IMR-90 (cell line): ENCODE measurements at regions of chr17 and their contacts with region 1.

Region 1: GRCh38 chr17:80892019-80892855 is 99.4 kb upstream of the CHMP6 start:
- DNase-seq: peak; percentile 99
- ATAC-seq: peak; percentile 89
- H3K4me3 ChIP-seq: no peak overlapping the region
- H3K27ac ChIP-seq: peak overlapping the region; percentile 94
- H3K4me1 ChIP-seq: peaks cover 29% of the 10 kb centered on the region
- H3K27me3 ChIP-seq: no peaks in the 10 kb centered on the region
- CTCF ChIP-seq: no peak
- POLR2A ChIP-seq: peak; percentile 80
- RAD21 ChIP-seq: peak; percentile 17

Region 2: DNA sequence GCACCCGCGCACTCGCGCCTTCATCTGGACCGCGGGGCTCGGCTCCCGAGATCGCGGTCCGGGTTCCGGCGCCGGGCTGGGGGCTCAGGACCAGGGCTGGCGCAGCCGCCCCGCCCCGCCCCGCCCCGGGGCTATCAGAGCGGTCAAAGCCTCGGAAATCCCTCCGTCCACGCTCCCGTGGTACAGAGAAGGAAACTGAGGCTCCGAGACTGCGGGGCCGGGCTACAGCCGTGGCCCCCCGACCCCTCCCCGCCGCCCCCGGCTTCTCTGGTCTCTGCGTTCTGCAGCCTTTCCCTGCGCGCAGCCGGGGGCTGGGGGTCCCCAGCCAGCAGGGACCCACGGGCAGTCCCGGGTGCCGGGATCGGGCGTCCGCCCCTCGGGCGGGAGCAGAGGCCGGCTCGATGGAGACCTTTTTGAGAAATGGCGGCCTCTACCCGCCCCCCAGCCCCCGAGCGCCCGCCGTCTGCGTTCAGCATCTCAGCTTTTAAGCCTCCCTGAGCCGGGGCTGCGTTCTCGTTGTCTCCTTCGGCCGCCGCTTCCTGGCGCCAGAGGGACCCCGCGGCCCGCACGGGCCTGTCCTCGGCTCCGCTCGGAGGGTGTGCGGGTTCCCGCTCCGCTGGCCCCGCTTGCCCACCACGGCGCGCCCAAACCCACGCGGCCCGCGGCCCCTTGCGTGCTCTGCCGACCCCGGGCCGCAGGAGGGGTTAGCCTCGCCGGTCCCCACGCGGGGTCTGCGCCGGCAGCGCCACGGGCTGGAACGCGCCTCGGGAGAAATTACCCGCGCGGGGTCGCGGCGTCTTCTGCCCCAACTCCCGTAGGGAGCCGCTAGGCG is 414.4 kb before region 1 on chr17:
- CTCF ChIA-PET with region 1: no interaction called
- POLR2A ChIA-PET with region 1: no interaction called
- dilution Hi-C with region 1: no loop called
- in situ Hi-C with region 1: no loop called
- intact Hi-C with region 1: loop called (anchors 5 kb)
- DNase-seq: peak; percentile 59
- ATAC-seq: peak; percentile 73
- H3K4me3 ChIP-seq: peak overlapping the region; percentile 47
- H3K27ac ChIP-seq: no peak overlapping the region
- H3K4me1 ChIP-seq: peaks cover 4% of the 10 kb centered on the region; the same call in 1 of the 2 replicates
- H3K27me3 ChIP-seq: peaks cover 63% of the 10 kb centered on the region
- CTCF ChIP-seq: peak; percentile 79
- POLR2A ChIP-seq: no peak
- RAD21 ChIP-seq: peak; percentile 83

Region 3: GRCh38 chr17:80673152-80673920 is 218.9 kb before region 1 on chr17:
- CTCF ChIA-PET with region 1: no interaction called
- POLR2A ChIA-PET with region 1: no interaction called
- dilution Hi-C with region 1: no loop called
- in situ Hi-C with region 1: no loop called
- intact Hi-C with region 1: loop called (anchors 10 kb)
- DNase-seq: peak; percentile 40
- ATAC-seq: peak; percentile 31; the same call in 1 of the 2 replicates
- H3K4me3 ChIP-seq: no peak overlapping the region
- H3K27ac ChIP-seq: peak overlapping the region; percentile 12; the same call in 1 of the 2 replicates
- H3K4me1 ChIP-seq: peaks cover 6% of the 10 kb centered on the region
- H3K27me3 ChIP-seq: no peaks in the 10 kb centered on the region
- CTCF ChIP-seq: no peak
- POLR2A ChIP-seq: no peak
- RAD21 ChIP-seq: no peak

Region 4: GRCh38 chr17:80761110-80761871 is 130.9 kb before region 1 on chr17:
- CTCF ChIA-PET with region 1: no interaction called
- POLR2A ChIA-PET with region 1: no interaction called
- dilution Hi-C with region 1: no loop called
- in situ Hi-C with region 1: no loop called
- intact Hi-C with region 1: no loop called
- DNase-seq: peak; percentile 88
- ATAC-seq: peak; percentile 79
- H3K4me3 ChIP-seq: no peak overlapping the region
- H3K27ac ChIP-seq: peak overlapping the region; percentile 68
- H3K4me1 ChIP-seq: peaks cover 24% of the 10 kb centered on the region
- H3K27me3 ChIP-seq: no peaks in the 10 kb centered on the region
- CTCF ChIP-seq: no peak; the same call in 1 of the 2 replicates
- POLR2A ChIP-seq: 0 out of 2 replicates have a peak, but pooled peaks have one; percentile 8
- RAD21 ChIP-seq: no peak

Region 5: GRCh38 chr17:80832888-80833583 is 59.2 kb before region 1 on chr17:
- CTCF ChIA-PET with region 1: no interaction called
- POLR2A ChIA-PET with region 1: no interaction called
- dilution Hi-C with region 1: no loop called
- in situ Hi-C with region 1: no loop called
- intact Hi-C with region 1: loop called (anchors 1 kb)
- DNase-seq: peak; percentile 99
- ATAC-seq: peak; percentile 95
- H3K4me3 ChIP-seq: peak overlapping the region; percentile 45
- H3K27ac ChIP-seq: peak overlapping the region; percentile 94
- H3K4me1 ChIP-seq: peaks cover 19% of the 10 kb centered on the region
- H3K27me3 ChIP-seq: no peaks in the 10 kb centered on the region
- CTCF ChIP-seq: 0 out of 2 replicates have a peak, but pooled peaks have one; percentile 1
- POLR2A ChIP-seq: peak; percentile 93
- RAD21 ChIP-seq: peak; percentile 34; the same call in 1 of the 2 replicates

Region 6: GRCh38 chr17:81109957-81110356 is 217.7 kb after region 1 on chr17:
- CTCF ChIA-PET with region 1: no interaction called
- POLR2A ChIA-PET with region 1: no interaction called
- dilution Hi-C with region 1: no loop called
- in situ Hi-C with region 1: no loop called
- intact Hi-C with region 1: no loop called
- DNase-seq: no peak
- ATAC-seq: no peak
- H3K4me3 ChIP-seq: no peak overlapping the region
- H3K27ac ChIP-seq: no peak overlapping the region
- H3K4me1 ChIP-seq: no peaks in the 10 kb centered on the region
- H3K27me3 ChIP-seq: no peaks in the 10 kb centered on the region
- CTCF ChIP-seq: no peak
- POLR2A ChIP-seq: no peak
- RAD21 ChIP-seq: no peak